ENCODE measurements at regions of chr16 and their contacts with region 1.

Region 1: DNA sequence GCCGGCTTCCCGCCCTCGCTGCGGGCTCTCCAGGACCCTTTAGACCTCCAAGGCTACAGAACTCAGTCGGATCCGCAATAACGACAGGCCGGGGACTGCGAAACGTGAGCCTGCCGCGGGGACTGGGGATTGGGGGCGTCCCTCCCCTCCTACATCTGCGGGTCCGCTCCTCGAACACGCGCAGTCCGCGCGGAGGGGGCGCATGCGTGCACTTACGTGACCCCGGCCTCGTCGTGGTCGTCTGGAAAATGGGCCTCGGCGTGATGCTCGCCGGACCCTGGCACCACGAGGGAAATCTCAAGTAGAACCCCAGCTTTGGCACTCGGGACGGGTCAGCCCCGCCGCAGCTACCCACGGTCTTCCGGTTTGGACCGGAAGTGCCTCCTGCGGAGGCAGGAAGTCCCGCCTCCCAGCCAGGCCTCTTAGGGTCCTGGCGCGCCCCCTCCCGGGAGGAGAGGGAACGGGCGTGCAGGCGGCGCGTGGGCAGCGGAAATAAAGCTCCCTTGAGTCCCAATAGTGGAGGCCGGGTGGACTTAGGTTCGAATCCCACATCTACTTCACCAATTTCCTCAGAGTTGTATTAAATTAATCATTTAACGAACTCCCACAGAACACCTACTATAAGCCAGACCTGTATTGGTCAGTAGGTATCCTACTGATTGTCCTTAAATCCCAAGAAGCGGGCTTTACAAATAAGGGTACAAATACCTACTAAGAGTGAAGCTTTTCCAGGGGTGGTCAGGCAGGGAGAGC is at the start of gene TAF1C:
- DNase-seq: peak; percentile 91 to 97
- ATAC-seq: peak; percentile 96 to 99 (median 98)
- H3K4me3 ChIP-seq: peak within 1 kb of the TSS; percentile 94
- H3K4me3 Mint-ChIP-seq: peak within 1 kb of the TSS; percentile 94
- H3K27ac ChIP-seq: peak within 1 kb of the TSS; percentile 69
- H3K27ac Mint-ChIP-seq: peak within 1 kb of the TSS; percentile 87 to 93
- H3K4me1 ChIP-seq: peaks cover 12% of the 10 kb centered on the region
- H3K4me1 Mint-ChIP-seq: peaks cover 24 to 27% of the 10 kb centered on the region in 2 donors
- H3K27me3 ChIP-seq: no peaks in the 10 kb centered on the region
- H3K27me3 Mint-ChIP-seq: no peaks in the 10 kb centered on the region
- CTCF ChIP-seq: peak; percentile 92
- total RNA-seq, gene TAF1C: 89.0 to 97.7 (median 91.9) TPM

Region 2: GRCh38 chr16:83926726-83927397 is 260.0 kb before region 1 on chr16:
- intact Hi-C with region 1: loop called (anchors 10 kb)
- DNase-seq: peak; percentile 60 to 69
- ATAC-seq: peak; percentile 65 to 75 (median 72)
- H3K4me3 ChIP-seq: no peak overlapping the region
- H3K4me3 Mint-ChIP-seq: no peak overlapping the region
- H3K27ac ChIP-seq: no peak overlapping the region
- H3K27ac Mint-ChIP-seq: no peak overlapping the region
- H3K4me1 ChIP-seq: peaks cover 19% of the 10 kb centered on the region
- H3K4me1 Mint-ChIP-seq: peaks cover 9 to 33% of the 10 kb centered on the region in 2 donors
- H3K27me3 ChIP-seq: no peaks in the 10 kb centered on the region
- H3K27me3 Mint-ChIP-seq: no peaks in the 10 kb centered on the region
- CTCF ChIP-seq: peak; percentile 91

Region 3: GRCh38 chr16:83956336-83957289 is 230.2 kb before region 1 on chr16:
- intact Hi-C with region 1: loop called (anchors 5 kb)
- DNase-seq: peak; percentile 67 to 77
- ATAC-seq: peak; percentile 46 to 74 (median 71)
- H3K4me3 ChIP-seq: no peak overlapping the region
- H3K4me3 Mint-ChIP-seq: no peak overlapping the region
- H3K27ac ChIP-seq: no peak overlapping the region
- H3K27ac Mint-ChIP-seq: no peak overlapping the region
- H3K4me1 ChIP-seq: peaks cover 18% of the 10 kb centered on the region
- H3K4me1 Mint-ChIP-seq: peaks cover 0 to 15% of the 10 kb centered on the region in 2 donors
- H3K27me3 ChIP-seq: peaks cover 7% of the 10 kb centered on the region
- H3K27me3 Mint-ChIP-seq: peaks cover 0 to 12% of the 10 kb centered on the region in 2 donors
- CTCF ChIP-seq: peak; percentile 81

Region 4: GRCh38 chr16:84084570-84085270 is 102.1 kb before region 1 on chr16:
- intact Hi-C with region 1: loop called (anchors 2 kb)
- DNase-seq: peak; percentile 36 to 87
- ATAC-seq: peak; percentile 65 to 77 (median 75)
- H3K4me3 ChIP-seq: no peak overlapping the region
- H3K4me3 Mint-ChIP-seq: no peak overlapping the region
- H3K27ac ChIP-seq: no peak overlapping the region
- H3K27ac Mint-ChIP-seq: no peak overlapping the region
- H3K4me1 ChIP-seq: peaks cover 27% of the 10 kb centered on the region
- H3K4me1 Mint-ChIP-seq: peaks cover 27 to 37% of the 10 kb centered on the region in 2 donors
- H3K27me3 ChIP-seq: no peaks in the 10 kb centered on the region
- H3K27me3 Mint-ChIP-seq: no peaks in the 10 kb centered on the region
- CTCF ChIP-seq: peak; percentile 63

Region 5: GRCh38 chr16:84116720-84117493 is 70.0 kb before region 1 on chr16 and contains the start of gene MBTPS1:
- intact Hi-C with region 1: loop called (anchors 2 kb)
- DNase-seq: peak; percentile 99
- ATAC-seq: peak; percentile 90 to 98 (median 92)
- H3K4me3 ChIP-seq: peak within 1 kb of the TSS; percentile 99
- H3K4me3 Mint-ChIP-seq: peak within 1 kb of the TSS; percentile 93
- H3K27ac ChIP-seq: peak within 1 kb of the TSS; percentile 89
- H3K27ac Mint-ChIP-seq: peak within 1 kb of the TSS; percentile 91 to 92
- H3K4me1 ChIP-seq: peaks cover 23% of the 10 kb centered on the region
- H3K4me1 Mint-ChIP-seq: peaks cover 13 to 17% of the 10 kb centered on the region in 2 donors
- H3K27me3 ChIP-seq: no peaks in the 10 kb centered on the region
- H3K27me3 Mint-ChIP-seq: no peaks in the 10 kb centered on the region
- CTCF ChIP-seq: peak; percentile 16
- total RNA-seq, gene MBTPS1: 85.2 to 124 (median 113) TPM

Measured in natural killer cell (primary cell).